ENCODE measurements at regions of chr9 and their contacts with region 1.

Region 1: DNA sequence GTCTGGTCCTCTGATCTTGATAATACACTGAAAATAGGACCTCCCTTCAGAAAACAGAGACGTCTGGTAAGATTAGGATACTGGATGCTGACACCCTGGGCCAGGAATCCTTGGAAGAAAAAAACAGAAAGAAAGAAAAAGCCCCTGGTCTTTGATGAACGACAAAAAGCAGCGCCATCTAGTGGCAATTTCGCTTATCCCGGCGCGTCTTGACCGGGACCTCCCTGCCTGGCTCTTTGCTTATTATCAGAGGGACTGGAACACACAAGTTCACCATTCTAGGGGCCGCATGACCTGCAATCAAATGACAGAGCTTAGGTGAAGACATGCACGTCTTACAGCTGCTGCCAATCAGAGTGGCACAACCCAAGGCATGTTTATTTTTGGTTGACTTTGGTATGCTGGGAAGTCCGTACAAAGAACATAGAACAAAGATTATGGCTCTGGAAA is 114.9 kb upstream of the NFIB start:
- DNase-seq: peak; percentile 73
- H3K4me3 Mint-ChIP-seq: no peak overlapping the region
- H3K27ac Mint-ChIP-seq: no peak overlapping the region
- H3K4me1 Mint-ChIP-seq: peaks cover 7% of the 10 kb centered on the region
- H3K27me3 Mint-ChIP-seq: no peaks in the 10 kb centered on the region
- CTCF ChIP-seq: peak; percentile 75

Region 2: GRCh38 chr9:13033959-13034693 is 1394.7 kb before region 1 on chr9:
- CTCF ChIA-PET with region 1: interaction called, 16 read pairs
- POLR2A ChIA-PET with region 1: no interaction called
- intact Hi-C with region 1: loop called (anchors 10 kb)
- DNase-seq: peak; percentile 68
- H3K4me3 Mint-ChIP-seq: peak overlapping the region; percentile 30
- H3K27ac Mint-ChIP-seq: no peak overlapping the region
- H3K4me1 Mint-ChIP-seq: peaks cover 16% of the 10 kb centered on the region
- H3K27me3 Mint-ChIP-seq: no peaks in the 10 kb centered on the region
- CTCF ChIP-seq: peak; percentile 83

Region 3: GRCh38 chr9:13351778-13352386 is 1076.9 kb before region 1 on chr9:
- CTCF ChIA-PET with region 1: interaction called, 14 read pairs
- POLR2A ChIA-PET with region 1: no interaction called
- intact Hi-C with region 1: loop called (anchors 1 kb)
- DNase-seq: peak; percentile 61
- H3K4me3 Mint-ChIP-seq: no peak overlapping the region
- H3K27ac Mint-ChIP-seq: no peak overlapping the region
- H3K4me1 Mint-ChIP-seq: no peaks in the 10 kb centered on the region
- H3K27me3 Mint-ChIP-seq: no peaks in the 10 kb centered on the region
- CTCF ChIP-seq: peak; percentile 45

Region 4: GRCh38 chr9:14395317-14396082 is 33.3 kb before region 1 on chr9:
- CTCF ChIA-PET with region 1: interaction called, 11 read pairs
- POLR2A ChIA-PET with region 1: no interaction called
- intact Hi-C with region 1: no loop called
- DNase-seq: no peak
- H3K4me3 Mint-ChIP-seq: no peak overlapping the region
- H3K27ac Mint-ChIP-seq: no peak overlapping the region
- H3K4me1 Mint-ChIP-seq: peaks cover 10% of the 10 kb centered on the region
- H3K27me3 Mint-ChIP-seq: no peaks in the 10 kb centered on the region
- CTCF ChIP-seq: no peak

Region 5: GRCh38 chr9:14406463-14406862 is 22.3 kb before region 1 on chr9:
- CTCF ChIA-PET with region 1: interaction called, 11 read pairs
- POLR2A ChIA-PET with region 1: interaction called, 4 read pairs
- intact Hi-C with region 1: no loop called
- DNase-seq: no peak
- H3K4me3 Mint-ChIP-seq: no peak overlapping the region
- H3K27ac Mint-ChIP-seq: no peak overlapping the region
- H3K4me1 Mint-ChIP-seq: no peaks in the 10 kb centered on the region
- H3K27me3 Mint-ChIP-seq: no peaks in the 10 kb centered on the region
- CTCF ChIP-seq: no peak

Region 6: DNA sequence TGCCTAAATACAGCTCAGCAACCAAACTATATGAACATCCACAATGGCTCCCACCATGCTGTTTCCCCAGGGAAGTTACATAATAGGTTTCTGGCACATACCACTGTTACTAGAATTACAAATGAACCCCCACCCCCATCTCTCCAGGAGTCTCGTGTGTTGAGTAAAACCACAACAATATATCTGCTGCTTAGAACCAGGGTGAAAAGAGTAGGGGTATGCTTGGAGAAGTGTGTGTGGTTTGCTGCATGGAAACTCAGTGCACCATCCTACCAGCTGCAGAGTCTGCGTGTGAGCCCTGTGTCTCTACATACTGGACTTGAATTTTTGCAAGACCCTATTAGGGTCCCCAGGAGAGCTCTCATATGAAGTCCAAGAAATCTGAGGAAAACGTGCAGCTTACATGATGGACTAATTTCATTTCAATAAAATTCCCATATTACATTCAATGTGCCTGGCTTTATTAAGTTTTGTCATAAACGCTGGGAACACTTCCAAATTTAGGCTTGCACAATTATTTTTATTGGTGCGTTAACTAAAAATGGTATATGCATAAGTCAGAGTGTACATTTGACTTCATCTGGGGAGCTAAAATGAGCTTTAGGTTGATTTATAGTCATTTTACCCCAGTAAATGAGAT is 10.4 kb before region 1 on chr9:
- CTCF ChIA-PET with region 1: interaction called, 27 read pairs
- POLR2A ChIA-PET with region 1: interaction called, 3 read pairs
- intact Hi-C with region 1: no loop called
- DNase-seq: peak; percentile 60
- H3K4me3 Mint-ChIP-seq: no peak overlapping the region
- H3K27ac Mint-ChIP-seq: no peak overlapping the region
- H3K4me1 Mint-ChIP-seq: peaks cover 3% of the 10 kb centered on the region
- H3K27me3 Mint-ChIP-seq: no peaks in the 10 kb centered on the region
- CTCF ChIP-seq: no peak

Region 7: GRCh38 chr9:14441976-14442651 is 13.3 kb after region 1 on chr9:
- CTCF ChIA-PET with region 1: interaction called, 61 read pairs
- POLR2A ChIA-PET with region 1: interaction called, 3 read pairs
- intact Hi-C with region 1: no loop called
- DNase-seq: peak; percentile 22
- H3K4me3 Mint-ChIP-seq: no peak overlapping the region
- H3K27ac Mint-ChIP-seq: no peak overlapping the region
- H3K4me1 Mint-ChIP-seq: peaks cover 6% of the 10 kb centered on the region
- H3K27me3 Mint-ChIP-seq: peaks cover 41% of the 10 kb centered on the region
- CTCF ChIP-seq: peak; percentile 22